ENCODE measurements at regions of chr3 and their contacts with region 1.

Region 1: GRCh38 chr3:56923521-56924224 is 121.9 kb upstream of the ARHGEF3 start:
- DNase-seq: peak; percentile 97
- H3K4me3 ChIP-seq: no peak overlapping the region
- H3K27ac ChIP-seq: peak overlapping the region; percentile 92
- H3K4me1 ChIP-seq: peaks cover 71% of the 10 kb centered on the region
- H3K27me3 ChIP-seq: no peaks in the 10 kb centered on the region
- CTCF ChIP-seq: no peak
- POLR2A ChIP-seq: no peak

Region 2: DNA sequence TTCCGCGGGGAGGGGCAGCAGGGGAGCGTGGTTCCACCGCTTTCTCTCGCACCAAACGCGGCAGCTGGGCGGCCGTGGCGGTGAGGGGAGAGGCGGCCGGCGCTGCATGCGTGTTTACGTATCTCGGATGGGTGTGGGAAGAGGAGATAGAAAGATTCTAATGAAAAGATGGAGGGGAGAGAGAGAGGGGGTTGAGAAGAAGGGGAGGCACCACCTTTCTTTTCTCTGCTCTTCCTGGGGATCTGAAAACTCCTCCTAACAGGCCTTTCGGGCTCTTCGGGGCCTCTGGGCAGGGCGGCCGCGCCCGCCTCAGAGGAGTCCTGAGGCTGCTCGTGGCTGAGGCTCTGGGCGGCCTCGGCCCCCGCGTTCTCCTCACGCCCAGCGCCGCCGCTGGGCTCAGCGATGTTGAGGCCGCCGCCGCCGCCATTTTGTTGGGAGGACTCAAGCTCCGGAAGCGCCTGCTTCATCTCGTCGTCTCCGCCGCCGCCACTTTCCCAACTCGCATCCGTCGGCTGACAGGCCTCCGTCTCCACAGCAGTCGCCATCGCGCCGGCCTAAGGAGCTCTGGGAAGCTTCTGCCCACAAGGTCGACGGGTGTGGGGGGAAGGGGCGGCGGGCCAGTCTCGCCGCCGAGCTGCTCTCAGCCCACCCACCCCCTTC is 241.1 kb before region 1 on chr3:
- CTCF ChIA-PET with region 1: no interaction called
- POLR2A ChIA-PET with region 1: interaction called, 3 read pairs
- dilution Hi-C with region 1: no loop called
- intact Hi-C with region 1: loop called (anchors 2 kb)
- DNase-seq: peak; percentile 76
- H3K4me3 ChIP-seq: peak overlapping the region; percentile 40 to 85 (median 76)
- H3K27ac ChIP-seq: peak overlapping the region; percentile 82
- H3K4me1 ChIP-seq: peaks cover 14% of the 10 kb centered on the region
- H3K27me3 ChIP-seq: no peaks in the 10 kb centered on the region
- CTCF ChIP-seq: peak in 1 of 2 donors; percentile 9
- POLR2A ChIP-seq: peak; percentile 86

Region 3: GRCh38 chr3:56702490-56703315 is 221.0 kb before region 1 on chr3:
- CTCF ChIA-PET with region 1: interaction called, 4 read pairs
- POLR2A ChIA-PET with region 1: no interaction called
- dilution Hi-C with region 1: no loop called
- intact Hi-C with region 1: loop called (anchors 5 kb)
- DNase-seq: peak; percentile 66
- H3K4me3 ChIP-seq: no peak overlapping the region
- H3K27ac ChIP-seq: no peak overlapping the region
- H3K4me1 ChIP-seq: no peaks in the 10 kb centered on the region
- H3K27me3 ChIP-seq: no peaks in the 10 kb centered on the region
- CTCF ChIP-seq: peak; percentile 56 to 61
- POLR2A ChIP-seq: no peak

Region 4: GRCh38 chr3:56753206-56753820 is 170.4 kb before region 1 on chr3:
- CTCF ChIA-PET with region 1: no interaction called
- POLR2A ChIA-PET with region 1: no interaction called
- dilution Hi-C with region 1: no loop called
- intact Hi-C with region 1: loop called (anchors 2 kb)
- DNase-seq: no peak
- H3K4me3 ChIP-seq: no peak overlapping the region
- H3K27ac ChIP-seq: no peak overlapping the region
- H3K4me1 ChIP-seq: peaks cover 23% of the 10 kb centered on the region
- H3K27me3 ChIP-seq: no peaks in the 10 kb centered on the region
- CTCF ChIP-seq: no peak
- POLR2A ChIP-seq: no peak

Region 5: DNA sequence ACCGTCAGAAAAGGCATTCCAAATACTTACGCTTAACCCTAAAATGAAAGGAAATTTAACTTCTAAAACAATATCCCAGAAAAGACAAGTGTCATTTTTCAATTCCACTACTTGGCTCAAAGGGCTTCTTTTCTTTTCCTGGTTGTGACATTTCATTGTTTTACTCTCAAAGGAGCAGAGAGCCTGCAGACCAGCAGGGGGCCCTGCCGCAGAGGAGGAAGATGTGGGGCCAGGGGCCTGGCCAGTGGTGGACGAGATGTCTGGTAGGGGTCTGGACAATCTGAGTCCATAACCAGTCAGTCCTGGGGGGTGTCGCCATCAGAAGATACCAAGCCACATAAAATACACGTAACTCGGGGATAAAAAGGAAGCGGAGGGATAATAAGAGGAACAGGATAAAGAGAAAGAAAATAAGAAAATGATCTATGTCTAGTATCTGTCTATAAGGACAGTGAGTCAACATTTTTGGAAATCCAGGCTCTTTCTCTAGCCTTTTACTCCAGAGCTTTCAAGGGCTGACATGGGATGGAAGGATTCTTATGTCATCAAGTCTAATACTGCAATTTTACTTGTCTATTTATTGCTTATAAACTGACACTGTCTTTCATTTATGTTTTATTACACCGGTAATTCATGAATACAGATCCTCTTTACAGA is 67.7 kb before region 1 on chr3:
- CTCF ChIA-PET with region 1: interaction called, 4 read pairs
- POLR2A ChIA-PET with region 1: no interaction called
- dilution Hi-C with region 1: no loop called
- intact Hi-C with region 1: loop called (anchors 1 kb)
- DNase-seq: peak; percentile 67
- H3K4me3 ChIP-seq: no peak overlapping the region
- H3K27ac ChIP-seq: no peak overlapping the region
- H3K4me1 ChIP-seq: peaks cover 8% of the 10 kb centered on the region
- H3K27me3 ChIP-seq: no peaks in the 10 kb centered on the region
- CTCF ChIP-seq: peak; percentile 87 to 89
- POLR2A ChIP-seq: no peak

Region 6: DNA sequence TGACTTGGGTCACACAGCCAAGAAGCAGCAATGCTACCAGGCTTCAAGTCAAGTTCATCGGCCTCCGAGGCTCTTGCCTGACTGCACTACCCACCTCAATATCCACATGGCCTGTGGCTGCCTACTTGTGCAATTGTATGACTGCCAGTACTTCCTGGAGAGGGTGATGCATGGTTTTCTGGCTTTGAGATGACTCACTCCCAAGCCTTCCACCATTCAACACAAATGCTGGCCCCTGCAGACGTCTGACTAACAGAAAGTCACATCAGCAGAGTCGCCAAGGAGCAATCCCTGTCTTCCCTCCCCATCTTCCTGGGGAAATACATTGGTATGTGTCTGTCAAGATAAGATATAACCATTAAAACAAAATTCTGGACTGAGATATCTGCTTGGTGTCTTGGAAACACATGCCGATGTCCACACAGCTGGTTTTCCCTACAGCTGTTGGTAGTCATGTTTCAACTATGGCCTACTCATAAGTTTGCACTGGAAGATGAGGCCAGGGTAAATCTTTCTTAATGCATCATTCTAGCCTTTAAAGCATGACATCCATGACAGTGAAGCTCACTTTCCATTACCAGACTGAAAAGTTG is 57.2 kb after region 1 on chr3:
- CTCF ChIA-PET with region 1: interaction called, 4 read pairs
- POLR2A ChIA-PET with region 1: no interaction called
- dilution Hi-C with region 1: no loop called
- intact Hi-C with region 1: loop called (anchors 1 kb)
- DNase-seq: peak; percentile 95
- H3K4me3 ChIP-seq: no peak overlapping the region
- H3K27ac ChIP-seq: peak overlapping the region; percentile 65
- H3K4me1 ChIP-seq: peaks cover 23% of the 10 kb centered on the region
- H3K27me3 ChIP-seq: no peaks in the 10 kb centered on the region
- CTCF ChIP-seq: no peak
- POLR2A ChIP-seq: no peak